Esophagus muscularis mucosa (tissue), 4 donors: ENCODE measurements at regions of chr6 and their contacts with region 1.

Region 1: GRCh38 chr6:154675602-154676088 is 57.6 kb upstream of the SCAF8 start:
- DNase-seq: peak; percentile 96
- H3K4me3 ChIP-seq: no peak overlapping the region
- H3K27ac ChIP-seq: no peak overlapping the region
- H3K4me1 ChIP-seq: no peaks in the 10 kb centered on the region
- H3K27me3 ChIP-seq: no peaks in the 10 kb centered on the region
- CTCF ChIP-seq: peak; percentile 98 to 99 (median 98)
- EP300 ChIP-seq: no peak
- POLR2A ChIP-seq: no peak

Region 2: GRCh38 chr6:154448448-154449096 is 227.1 kb before region 1 on chr6:
- intact Hi-C with region 1: no loop called
- DNase-seq: no peak
- H3K4me3 ChIP-seq: peak overlapping the region in 3 of 4 donors; percentile 5 to 24 (median 16)
- H3K27ac ChIP-seq: peak overlapping the region; percentile 75 to 84 (median 80)
- H3K4me1 ChIP-seq: peaks cover 32 to 66% (median 55%) of the 10 kb centered on the region in 4 donors
- H3K27me3 ChIP-seq: no peaks in the 10 kb centered on the region
- CTCF ChIP-seq: peak in 1 of 3 experiments; percentile 60
- EP300 ChIP-seq: peak; percentile 82
- POLR2A ChIP-seq: no peak

Region 3: DNA sequence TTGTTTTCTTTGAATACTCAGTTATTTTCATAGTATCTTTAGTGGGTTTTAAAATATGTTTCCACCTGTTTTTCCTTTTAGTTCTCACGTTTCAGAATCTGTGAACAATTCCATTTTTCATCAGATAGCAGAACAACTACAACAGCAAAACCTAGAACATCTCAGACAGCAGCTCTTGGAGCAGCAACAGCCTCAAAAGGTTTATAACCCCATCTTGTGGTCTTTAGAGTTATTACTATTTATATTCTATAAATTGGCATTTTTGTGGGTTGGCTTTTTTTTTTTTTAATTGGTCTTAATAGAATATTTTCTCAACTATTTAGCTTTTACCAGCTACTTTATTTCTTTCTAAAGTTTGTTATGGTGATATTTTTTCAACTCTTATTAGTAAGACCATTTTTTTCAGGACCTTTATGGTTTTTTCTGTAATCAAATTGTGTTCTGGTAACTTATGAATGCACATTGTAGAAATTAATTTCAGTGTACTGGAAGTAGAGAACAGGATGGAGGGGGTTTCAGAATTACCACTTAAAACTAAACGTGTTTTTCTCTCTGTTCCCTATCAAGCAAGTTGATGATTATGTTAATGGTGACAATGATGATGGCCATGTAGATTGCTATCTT is 129.8 kb after region 1 on chr6:
- intact Hi-C with region 1: loop called (anchors 2 kb)
- DNase-seq: no peak
- H3K4me3 ChIP-seq: no peak overlapping the region
- H3K27ac ChIP-seq: no peak overlapping the region
- H3K4me1 ChIP-seq: peaks cover 0 to 8% (median 3%) of the 10 kb centered on the region in 4 donors
- H3K27me3 ChIP-seq: no peaks in the 10 kb centered on the region
- CTCF ChIP-seq: peak; percentile 57
- EP300 ChIP-seq: no peak
- POLR2A ChIP-seq: no peak

Region 4: DNA sequence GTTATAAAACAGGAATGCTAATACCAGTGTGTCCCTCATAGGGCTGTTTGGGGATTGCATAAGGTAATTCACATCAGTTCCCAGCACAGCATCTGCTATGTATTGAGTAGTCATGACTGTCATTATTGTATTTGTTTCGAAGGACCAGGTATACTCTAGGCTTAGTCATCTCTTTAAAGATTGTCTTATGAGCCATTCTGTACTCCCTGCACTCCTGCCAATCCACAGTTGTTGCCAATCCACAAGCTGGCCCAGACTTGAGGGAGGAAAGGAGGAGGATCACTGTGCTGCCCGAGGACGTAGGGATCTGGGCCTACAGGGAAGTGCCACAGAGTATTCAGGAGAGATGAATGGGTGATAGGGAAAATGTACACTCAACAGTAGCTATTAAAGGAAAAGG is 206.5 kb after region 1 on chr6:
- intact Hi-C with region 1: no loop called
- DNase-seq: peak; percentile 77
- H3K4me3 ChIP-seq: no peak overlapping the region
- H3K27ac ChIP-seq: no peak overlapping the region
- H3K4me1 ChIP-seq: peaks cover 4 to 26% (median 7%) of the 10 kb centered on the region in 4 donors
- H3K27me3 ChIP-seq: no peaks in the 10 kb centered on the region
- CTCF ChIP-seq: no peak
- EP300 ChIP-seq: no peak
- POLR2A ChIP-seq: no peak